Breast epithelium (tissue), 4 donors: ENCODE measurements at regions of chr17 and their contacts with region 1.

Region 1: GRCh38 chr17:42725143-42725542 is 19.7 kb downstream of the EZH1 start:
- DNase-seq: no peak
- H3K4me3 ChIP-seq: no peak overlapping the region
- H3K27ac ChIP-seq: no peak overlapping the region
- H3K4me1 ChIP-seq: no peaks in the 10 kb centered on the region
- H3K27me3 ChIP-seq: no peaks in the 10 kb centered on the region
- CTCF ChIP-seq: no peak
- POLR2A ChIP-seq: no peak

Region 2: GRCh38 chr17:41882756-41883155 is 842.4 kb before region 1 on chr17:
- intact Hi-C with region 1: loop called (anchors 5 kb)
- DNase-seq: no peak
- H3K4me3 ChIP-seq: no peak overlapping the region
- H3K27ac ChIP-seq: no peak overlapping the region
- H3K4me1 ChIP-seq: no peaks in the 10 kb centered on the region
- H3K27me3 ChIP-seq: no peaks in the 10 kb centered on the region
- CTCF ChIP-seq: no peak
- POLR2A ChIP-seq: no peak

Region 3: GRCh38 chr17:43114151-43114552 is 389.0 kb after region 1 on chr17:
- intact Hi-C with region 1: loop called (anchors 5 kb)
- DNase-seq: no peak
- H3K4me3 ChIP-seq: no peak overlapping the region
- H3K27ac ChIP-seq: no peak overlapping the region
- H3K4me1 ChIP-seq: no peaks in the 10 kb centered on the region
- H3K27me3 ChIP-seq: no peaks in the 10 kb centered on the region
- CTCF ChIP-seq: no peak
- POLR2A ChIP-seq: no peak